ENCODE measurements at regions of chr3 and their contacts with region 1.

Region 1: DNA sequence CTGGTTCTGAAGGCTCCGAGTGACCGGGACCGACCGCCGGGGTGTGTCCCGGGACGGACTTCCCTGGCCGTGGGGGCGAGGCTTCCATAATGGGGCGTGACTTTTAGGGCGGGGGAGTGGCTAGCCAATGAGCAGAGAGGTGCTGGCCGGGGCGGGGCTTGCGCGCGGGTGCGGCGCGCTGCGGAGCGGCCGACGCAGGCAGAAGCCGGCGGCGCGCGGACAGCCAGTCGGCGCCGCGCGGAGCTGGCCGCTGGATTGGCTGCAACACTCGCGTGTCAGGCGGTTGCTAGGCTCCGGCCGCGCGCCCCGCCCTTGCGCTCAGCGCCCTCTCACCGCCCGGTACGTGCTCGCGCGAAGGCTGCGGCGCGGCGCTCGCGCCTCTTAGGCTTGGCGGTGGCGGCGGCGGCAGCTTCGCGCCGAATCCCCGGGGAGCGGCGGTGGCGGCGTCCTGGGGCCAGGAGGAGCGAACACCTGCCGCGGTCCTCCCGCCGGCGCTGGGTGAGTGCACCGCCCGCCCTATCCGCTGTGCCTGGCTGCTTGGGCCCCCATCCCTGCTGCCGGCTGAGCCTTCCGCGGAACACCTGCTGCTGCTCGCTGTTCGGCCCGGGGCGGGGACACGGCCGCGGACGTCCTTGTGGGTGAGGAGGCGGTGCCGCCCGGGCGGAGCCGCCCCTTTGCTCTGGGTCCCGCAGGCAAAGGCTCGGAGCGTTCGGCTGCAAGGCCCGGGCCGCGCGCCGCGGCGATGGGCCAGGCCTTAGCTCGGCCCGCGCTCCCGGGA is at the start of gene DAG1:
- DNase-seq: peak; percentile 99
- H3K4me3 ChIP-seq: peak within 1 kb of the TSS; percentile 76 to 88 (median 86)
- H3K27ac ChIP-seq: peak within 1 kb of the TSS; percentile 97 to 100 (median 98)
- H3K4me1 ChIP-seq: peaks cover 0 to 44% (median 36%) of the 10 kb centered on the region in 4 donors
- H3K27me3 ChIP-seq: no peaks in the 10 kb centered on the region
- CTCF ChIP-seq: no peak
- EP300 ChIP-seq: no peak
- POLR2A ChIP-seq: peak; percentile 21 to 56
- total RNA-seq, gene DAG1: 42.8 to 73.4 (median 66.5) TPM

Region 2: DNA sequence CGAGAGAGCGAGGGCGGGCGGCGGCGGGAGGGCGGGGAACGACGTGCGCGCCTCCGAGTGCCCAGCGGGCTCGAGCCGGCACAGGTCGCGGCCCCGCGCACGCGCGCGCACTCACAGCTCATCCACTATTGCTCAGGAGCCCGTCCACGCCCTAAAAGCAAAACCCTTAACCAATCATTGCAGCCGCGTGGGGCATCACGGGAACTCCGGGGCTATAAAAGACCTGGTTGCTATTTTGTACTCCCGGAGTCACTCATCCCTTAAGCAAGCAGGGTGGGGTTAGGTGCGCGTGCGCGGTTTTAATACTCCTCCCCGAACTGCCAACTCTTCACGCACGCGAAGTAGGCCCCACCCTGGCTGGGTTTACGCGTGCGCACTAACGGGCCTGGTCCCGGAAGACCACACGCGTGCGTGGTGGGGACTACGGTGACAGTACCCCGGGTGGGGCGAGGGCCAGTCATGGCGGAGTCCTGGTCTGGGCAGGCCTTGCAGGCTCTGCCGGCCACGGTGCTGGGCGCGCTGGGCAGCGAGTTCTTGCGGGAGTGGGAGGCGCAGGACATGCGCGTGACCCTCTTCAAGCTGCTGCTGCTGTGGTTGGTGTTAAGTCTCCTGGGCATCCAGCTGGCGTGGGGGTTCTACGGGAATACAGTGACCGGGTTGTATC is 58.0 kb before region 1 on chr3 and contains the starts of genes RHOA and TCTA:
- intact Hi-C with region 1: loop called (anchors 2 kb)
- DNase-seq: peak; percentile 100
- H3K4me3 ChIP-seq: peak within 1 kb of the TSS; percentile 69 to 95 (median 74)
- H3K27ac ChIP-seq: peak within 1 kb of the TSS; percentile 95 to 99 (median 98)
- H3K4me1 ChIP-seq: peaks cover 0 to 73% (median 50%) of the 10 kb centered on the region in 4 donors
- H3K27me3 ChIP-seq: no peaks in the 10 kb centered on the region
- CTCF ChIP-seq: no peak
- EP300 ChIP-seq: peak in 1 of 4 donors; percentile 80
- POLR2A ChIP-seq: peak; percentile 93 to 96
- total RNA-seq, gene RHOA: 369 to 440 (median 416) TPM
- total RNA-seq, gene TCTA: 15.1 to 25.0 (median 16.5) TPM

Region 3: GRCh38 chr3:49512771-49513358 is 42.7 kb after region 1 on chr3:
- intact Hi-C with region 1: loop called (anchors 5 kb)
- DNase-seq: no peak
- H3K4me3 ChIP-seq: no peak overlapping the region
- H3K27ac ChIP-seq: no peak overlapping the region
- H3K4me1 ChIP-seq: peaks cover 0 to 49% (median 38%) of the 10 kb centered on the region in 4 donors
- H3K27me3 ChIP-seq: no peaks in the 10 kb centered on the region
- CTCF ChIP-seq: no peak
- EP300 ChIP-seq: no peak
- POLR2A ChIP-seq: no peak

Region 4: GRCh38 chr3:49703443-49703927 is 233.4 kb after region 1 on chr3:
- intact Hi-C with region 1: no loop called
- DNase-seq: peak; percentile 80
- H3K4me3 ChIP-seq: no peak overlapping the region
- H3K27ac ChIP-seq: no peak overlapping the region
- H3K4me1 ChIP-seq: peaks cover 0 to 2% (median 0%) of the 10 kb centered on the region in 4 donors
- H3K27me3 ChIP-seq: no peaks in the 10 kb centered on the region
- CTCF ChIP-seq: peak; percentile 30 to 76 (median 72)
- EP300 ChIP-seq: no peak
- POLR2A ChIP-seq: no peak